Activated CD4-positive, alpha-beta T cell treated with anti-CD3 and anti-CD28 coated beads for 36 hours (primary cell): ENCODE measurements at regions of chr12 and their contacts with region 1.

Region 1: GRCh38 chr12:113184900-113185773 is at the starts of genes DDX54 and RITA1:
- DNase-seq: peak; percentile 94
- ATAC-seq: peak; percentile 89
- H3K4me3 Mint-ChIP-seq: peak within 1 kb of the TSS; percentile 97
- H3K27ac Mint-ChIP-seq: peak within 1 kb of the TSS; percentile 96
- H3K4me1 Mint-ChIP-seq: peaks cover 36% of the 10 kb centered on the region
- H3K27me3 Mint-ChIP-seq: no peaks in the 10 kb centered on the region
- total RNA-seq, gene DDX54: 118 to 132 TPM
- total RNA-seq, gene RITA1: 23.4 to 25.7 TPM

Region 2: DNA sequence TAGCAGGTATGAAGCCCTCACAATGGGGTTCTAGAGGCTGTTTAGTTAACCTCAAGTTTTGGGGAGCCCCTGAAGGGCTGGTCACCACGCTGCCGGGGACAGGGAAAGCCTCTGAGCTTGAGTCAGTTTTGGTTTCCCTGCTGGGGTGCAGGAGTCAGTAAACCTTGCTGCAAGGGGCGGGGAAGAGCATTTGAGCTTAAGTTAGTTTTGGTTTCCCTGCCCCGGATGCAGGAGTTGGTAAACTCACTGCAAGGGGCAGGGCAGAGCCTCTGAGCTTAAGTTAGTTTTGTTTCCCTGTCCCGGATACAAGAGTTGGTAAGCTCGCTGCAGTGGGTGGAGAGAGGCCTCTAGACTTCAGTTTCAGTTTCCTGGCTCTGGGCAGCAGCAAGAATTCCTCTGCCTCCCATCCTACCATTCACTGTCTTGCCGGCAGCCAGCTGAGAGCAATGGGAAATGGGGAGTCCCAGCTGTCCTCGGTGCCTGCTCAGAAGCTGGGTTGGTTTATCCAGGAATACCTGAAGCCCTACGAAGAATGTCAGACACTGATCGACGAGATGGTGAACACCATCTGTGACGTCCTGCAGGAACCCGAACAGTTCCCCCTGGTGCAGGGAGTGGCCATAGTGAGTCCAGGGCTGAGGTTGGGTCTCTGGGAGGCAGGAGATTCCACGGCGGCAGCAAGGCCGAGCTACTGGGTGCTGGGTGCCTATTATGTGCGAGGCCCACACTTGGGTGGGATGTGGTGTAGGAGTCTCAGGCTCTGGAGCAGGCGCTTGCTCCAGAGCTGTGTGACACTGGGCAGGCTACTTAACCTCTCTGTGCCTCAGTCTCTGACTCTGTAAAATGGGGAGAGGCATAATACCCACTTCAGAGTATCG is 206.7 kb before region 1 on chr12 and contains the start of gene OAS2:
- CTCF ChIA-PET with region 1: interaction called, 3 read pairs
- POLR2A ChIA-PET with region 1: no interaction called
- intact Hi-C with region 1: loop called in 1 of 2 experiments (anchors 1 kb)
- DNase-seq: peak; percentile 90
- ATAC-seq: peak; percentile 93
- H3K4me3 Mint-ChIP-seq: peak within 1 kb of the TSS; percentile 100
- H3K27ac Mint-ChIP-seq: peak within 1 kb of the TSS; percentile 100
- H3K4me1 Mint-ChIP-seq: peaks cover 44% of the 10 kb centered on the region
- H3K27me3 Mint-ChIP-seq: no peaks in the 10 kb centered on the region
- total RNA-seq, gene OAS2: 148 to 278 TPM

Region 3: DNA sequence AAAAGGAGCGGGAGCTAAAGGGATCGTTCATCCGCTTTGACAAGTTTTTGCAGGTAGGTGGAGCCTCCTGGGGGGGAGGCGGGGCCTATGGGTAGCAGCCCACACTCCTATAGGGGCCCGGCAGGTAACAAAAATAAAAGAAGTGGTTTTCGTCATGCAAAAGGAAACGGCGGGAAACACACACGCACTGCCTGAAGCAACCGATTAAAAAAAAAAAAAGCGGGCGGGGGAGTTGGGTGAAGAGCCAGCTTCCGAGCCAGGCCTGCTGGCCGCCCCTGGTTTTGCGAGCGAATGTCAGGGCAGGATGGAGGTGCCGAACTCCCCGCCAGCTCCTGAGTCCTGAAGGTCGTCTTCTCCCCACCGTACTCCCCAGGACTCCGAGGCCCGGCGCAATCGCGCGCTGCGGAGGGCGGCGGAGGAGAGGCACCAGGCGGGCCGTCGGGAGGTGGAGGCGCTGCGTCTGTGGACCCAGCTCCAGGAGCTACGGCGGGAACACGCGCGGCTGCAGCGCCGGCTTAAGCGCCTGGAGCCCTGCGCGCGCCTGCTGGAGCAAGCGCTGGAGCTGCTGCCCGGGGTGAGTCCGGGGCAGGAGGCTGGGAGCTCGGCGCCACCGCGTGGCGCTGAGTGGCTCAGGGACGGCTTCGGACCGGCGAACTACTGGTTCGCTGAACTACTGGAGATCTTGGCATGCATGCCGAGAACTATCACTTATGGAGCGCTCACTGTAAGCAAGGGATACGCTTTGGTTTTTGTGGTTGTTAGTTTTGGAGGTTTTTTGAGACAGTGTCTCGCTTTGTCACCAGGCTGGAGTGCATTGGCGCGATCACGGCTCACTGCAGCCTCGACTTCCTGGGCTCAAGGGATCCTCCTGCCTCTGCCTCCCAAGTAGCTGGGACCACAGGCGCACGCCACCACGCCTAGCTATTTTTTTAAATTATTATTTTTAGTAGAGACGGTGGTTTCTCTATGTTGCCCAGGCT is 32.0 kb before region 1 on chr12:
- CTCF ChIA-PET with region 1: no interaction called
- POLR2A ChIA-PET with region 1: interaction called, 3 read pairs
- intact Hi-C with region 1: loop called in 1 of 2 experiments (anchors 1 kb)
- DNase-seq: peak; percentile 82
- ATAC-seq: peak; percentile 78
- H3K4me3 Mint-ChIP-seq: peak overlapping the region; percentile 69
- H3K27ac Mint-ChIP-seq: peak overlapping the region; percentile 47
- H3K4me1 Mint-ChIP-seq: peaks cover 17% of the 10 kb centered on the region
- H3K27me3 Mint-ChIP-seq: peaks cover 11% of the 10 kb centered on the region

Region 4: DNA sequence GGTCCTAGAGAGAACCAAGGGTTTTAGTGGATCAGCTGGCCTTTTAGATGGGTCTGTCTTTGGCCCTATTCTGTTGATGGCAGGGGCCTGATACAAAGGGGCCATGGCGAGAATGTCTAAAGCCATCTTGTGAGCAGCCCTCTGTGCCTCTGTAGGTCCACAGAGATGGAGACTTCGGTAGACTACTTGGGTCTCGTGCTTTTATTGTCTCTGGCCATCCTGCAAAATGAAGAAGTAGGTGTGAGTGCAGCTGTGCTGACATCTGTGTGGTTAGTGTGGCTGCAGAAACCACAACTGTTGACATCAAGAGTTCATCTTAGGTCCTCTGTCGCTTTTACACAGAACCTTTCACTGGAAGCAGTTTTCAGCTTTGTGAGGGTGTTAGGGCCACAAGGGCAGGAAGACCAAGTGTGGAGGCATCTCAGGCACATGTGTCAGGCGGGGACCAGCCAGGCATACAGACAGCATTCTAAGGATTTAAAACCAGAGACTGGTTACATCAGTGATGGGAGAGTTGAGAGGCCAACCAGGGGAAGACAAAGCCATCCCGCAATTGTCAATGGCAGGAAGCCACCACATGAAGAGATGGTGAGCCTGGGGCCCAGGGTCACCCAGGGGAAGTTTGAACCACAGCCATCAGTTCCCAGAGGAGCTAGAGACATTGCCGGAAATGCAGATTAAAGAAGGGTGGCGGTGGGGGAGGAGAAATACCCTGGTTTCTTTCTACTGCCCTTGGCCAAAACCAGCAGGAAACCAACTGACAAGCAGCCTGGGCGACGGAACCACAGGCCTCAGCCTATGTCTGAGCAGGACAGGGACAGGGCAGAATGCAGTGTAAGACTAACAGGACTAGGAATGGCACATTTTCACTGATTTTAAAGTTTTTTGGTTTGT is 23.2 kb after region 1 on chr12:
- CTCF ChIA-PET with region 1: interaction called, 4 read pairs
- POLR2A ChIA-PET with region 1: interaction called, 7 read pairs
- intact Hi-C with region 1: loop called in 1 of 2 experiments (anchors 1 kb)
- DNase-seq: peak; percentile 85
- ATAC-seq: peak; percentile 86
- H3K4me3 Mint-ChIP-seq: peak overlapping the region; percentile 45
- H3K27ac Mint-ChIP-seq: peak overlapping the region; percentile 95
- H3K4me1 Mint-ChIP-seq: peaks cover 54% of the 10 kb centered on the region
- H3K27me3 Mint-ChIP-seq: no peaks in the 10 kb centered on the region

Region 5: DNA sequence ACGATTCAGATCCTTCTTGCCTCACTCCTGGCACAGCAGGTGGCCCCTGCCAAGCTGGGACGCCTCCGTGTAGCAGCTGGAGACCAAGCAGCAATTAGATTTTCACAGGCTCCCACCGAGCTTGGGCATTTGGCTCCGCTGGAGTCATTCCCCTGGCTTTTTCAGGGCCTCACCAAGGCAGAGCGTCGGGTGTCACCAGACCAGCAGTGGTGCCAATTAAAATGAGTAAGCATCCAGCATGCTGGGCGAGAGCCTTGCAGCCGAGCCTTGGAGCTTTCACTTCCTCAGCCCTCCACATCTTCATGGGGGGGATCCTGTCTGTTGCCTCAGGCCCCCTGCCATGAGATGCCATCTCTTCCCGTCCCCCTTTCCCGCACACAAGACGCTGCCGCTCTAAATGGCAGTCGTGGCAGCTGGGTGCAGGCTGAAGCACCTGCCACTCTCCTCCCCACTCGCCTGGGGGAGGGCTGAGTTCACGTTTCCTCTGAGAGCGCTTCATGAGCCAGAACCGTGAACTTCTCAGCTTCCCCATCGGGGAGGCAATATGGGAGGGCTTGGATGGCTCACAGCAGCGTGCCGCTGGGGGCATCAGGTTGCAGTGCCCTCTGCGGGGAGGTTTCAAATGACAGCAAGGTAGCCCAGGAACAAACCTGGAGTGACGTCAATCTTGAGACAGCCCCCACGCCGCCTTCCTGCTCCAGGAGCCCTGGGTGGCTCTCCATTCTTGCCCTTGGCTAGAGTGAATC is 47.9 kb after region 1 on chr12:
- CTCF ChIA-PET with region 1: interaction called, 4 read pairs
- POLR2A ChIA-PET with region 1: interaction called, 4 read pairs
- intact Hi-C with region 1: loop called in 1 of 2 experiments (anchors 2 kb)
- DNase-seq: peak; percentile 80
- ATAC-seq: peak; percentile 77
- H3K4me3 Mint-ChIP-seq: peak overlapping the region; percentile 64
- H3K27ac Mint-ChIP-seq: peak overlapping the region; percentile 93
- H3K4me1 Mint-ChIP-seq: peaks cover 60% of the 10 kb centered on the region
- H3K27me3 Mint-ChIP-seq: no peaks in the 10 kb centered on the region

Region 6: DNA sequence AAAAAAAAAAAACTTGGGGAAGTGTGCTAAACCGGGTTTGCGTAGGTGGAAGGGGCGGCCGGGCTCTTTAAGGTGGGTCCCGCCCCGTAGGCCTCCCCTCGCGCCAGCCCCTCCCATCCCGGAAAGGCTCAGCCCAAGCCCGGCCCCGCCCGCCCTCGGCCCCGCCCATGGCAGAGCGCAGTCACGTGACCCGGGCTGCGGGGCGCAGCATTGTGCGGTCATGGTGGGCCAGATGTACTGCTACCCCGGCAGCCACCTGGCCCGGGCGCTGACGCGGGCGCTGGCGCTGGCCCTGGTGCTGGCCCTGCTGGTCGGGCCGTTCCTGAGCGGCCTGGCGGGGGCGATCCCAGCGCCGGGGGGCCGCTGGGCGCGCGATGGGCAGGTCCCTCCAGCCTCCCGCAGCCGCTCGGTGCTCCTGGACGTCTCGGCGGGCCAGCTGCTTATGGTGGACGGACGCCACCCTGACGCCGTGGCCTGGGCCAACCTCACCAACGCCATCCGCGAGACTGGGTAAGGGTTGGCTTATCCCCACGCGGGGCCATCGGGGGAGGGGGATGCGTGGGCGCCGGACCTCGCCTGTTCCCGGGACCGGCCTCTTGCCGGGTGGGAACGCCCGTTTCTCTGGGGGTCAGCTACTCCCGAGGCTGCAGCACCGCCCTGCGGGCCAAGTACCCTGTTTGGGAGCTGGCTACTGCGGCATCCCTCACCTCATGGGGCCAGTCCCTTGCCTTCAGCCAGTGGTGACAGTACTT is 173.4 kb after region 1 on chr12 and contains the start of gene PLBD2:
- CTCF ChIA-PET with region 1: no interaction called
- POLR2A ChIA-PET with region 1: no interaction called
- intact Hi-C with region 1: loop called in 1 of 2 experiments (anchors 1 kb)
- DNase-seq: peak; percentile 98
- ATAC-seq: peak; percentile 98
- H3K4me3 Mint-ChIP-seq: peak within 1 kb of the TSS; percentile 84
- H3K27ac Mint-ChIP-seq: peak within 1 kb of the TSS; percentile 86
- H3K4me1 Mint-ChIP-seq: peaks cover 22% of the 10 kb centered on the region
- H3K27me3 Mint-ChIP-seq: no peaks in the 10 kb centered on the region
- total RNA-seq, gene PLBD2: 13.7 to 17.3 TPM

Region 7: DNA sequence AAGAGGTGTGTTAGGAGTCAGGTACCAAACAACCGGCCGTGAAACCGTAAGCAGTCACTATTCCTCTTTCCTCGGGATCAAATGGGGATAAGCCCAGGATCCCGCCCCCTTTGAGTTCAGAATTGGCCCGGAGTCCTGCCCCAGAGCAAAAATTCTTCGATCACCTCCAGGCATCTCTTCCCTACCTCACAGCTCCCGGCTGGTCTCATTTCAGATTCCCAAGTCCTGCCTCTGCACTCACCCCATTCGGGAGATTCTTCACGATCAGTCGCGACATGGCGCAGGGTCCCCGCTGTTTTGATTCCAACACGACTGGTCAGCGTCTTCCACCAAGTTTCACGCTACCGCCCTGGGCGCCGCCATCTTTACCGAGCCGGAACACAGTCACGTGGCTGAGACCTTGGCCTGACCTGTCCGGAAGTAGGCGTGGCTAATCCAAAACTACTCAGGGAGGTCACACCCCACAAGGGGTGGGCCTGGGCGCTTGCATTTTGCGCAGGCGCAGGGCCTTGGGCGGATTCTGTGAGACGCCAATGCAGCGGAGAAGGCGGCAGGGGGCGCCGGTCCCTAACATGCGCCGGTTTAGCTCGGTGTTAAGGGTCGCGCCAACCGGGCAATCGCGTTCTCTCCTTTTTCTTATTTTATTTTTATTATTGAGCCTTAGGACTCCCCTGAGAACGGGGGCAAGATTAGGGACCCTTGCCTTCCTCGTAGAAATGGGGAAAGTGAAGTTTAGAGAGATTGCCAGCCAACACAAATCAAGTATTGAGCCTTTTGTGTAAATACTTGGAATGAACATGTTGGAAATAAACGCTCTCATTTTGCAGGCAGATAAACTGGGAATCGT is 781.0 kb after region 1 on chr12 and contains the start of gene RBM19:
- CTCF ChIA-PET with region 1: no interaction called
- POLR2A ChIA-PET with region 1: no interaction called
- intact Hi-C with region 1: loop called in 1 of 2 experiments (anchors 10 kb)
- DNase-seq: peak; percentile 98
- ATAC-seq: peak; percentile 76
- H3K4me3 Mint-ChIP-seq: peak within 1 kb of the TSS; percentile 99
- H3K27ac Mint-ChIP-seq: peak within 1 kb of the TSS; percentile 99
- H3K4me1 Mint-ChIP-seq: peaks cover 50% of the 10 kb centered on the region
- H3K27me3 Mint-ChIP-seq: no peaks in the 10 kb centered on the region
- total RNA-seq, gene RBM19: 79.6 to 93.5 TPM